ENCODE measurements at regions of chr5 and their contacts with region 1.

Region 1: GRCh38 chr5:66242050-66242715 is 98.1 kb downstream of the SREK1 start:
- DNase-seq: no peak
- H3K4me3 Mint-ChIP-seq: no peak overlapping the region
- H3K27ac Mint-ChIP-seq: no peak overlapping the region
- H3K4me1 Mint-ChIP-seq: no peaks in the 10 kb centered on the region
- H3K27me3 Mint-ChIP-seq: no peaks in the 10 kb centered on the region

Region 2: GRCh38 chr5:65831276-65831675 is 410.9 kb before region 1 on chr5:
- CTCF ChIA-PET with region 1: no interaction called
- POLR2A ChIA-PET with region 1: interaction called, 11 read pairs
- DNase-seq: no peak
- H3K4me3 Mint-ChIP-seq: no peak overlapping the region
- H3K27ac Mint-ChIP-seq: no peak overlapping the region
- H3K4me1 Mint-ChIP-seq: peaks cover 4% of the 10 kb centered on the region
- H3K27me3 Mint-ChIP-seq: no peaks in the 10 kb centered on the region

Measured in activated CD4-positive, alpha-beta T cell treated with anti-CD3 and anti-CD28 coated beads, Interleukin-2, amount 10 ng/mL, durations not matched to agents 7 days and 5 days (primary cell).